OCI-LY7 (cell line): ENCODE measurements at regions of chr3 and their contacts with region 1.

Region 1: DNA sequence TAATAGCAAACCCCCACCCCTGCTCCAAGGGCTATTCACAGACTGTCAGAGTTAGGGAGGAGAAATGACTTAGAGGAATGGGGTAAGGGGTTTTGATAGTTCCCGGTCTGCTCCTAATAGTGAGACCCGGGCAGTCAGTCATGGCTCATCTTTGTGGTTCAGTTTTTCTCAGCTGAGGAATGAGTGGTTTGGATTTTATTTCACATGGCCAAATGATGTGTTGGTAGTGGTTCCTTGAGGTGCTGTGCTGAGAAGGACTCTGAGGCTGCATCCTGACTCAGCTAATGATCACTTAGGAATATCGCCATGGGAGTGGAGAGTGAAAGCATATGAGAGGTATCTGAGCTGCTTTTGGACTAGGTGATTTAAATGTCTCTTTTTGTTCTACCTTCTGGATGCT is 80.2 kb downstream of the LPP start:
- DNase-seq: no peak
- H3K4me3 ChIP-seq: no peak overlapping the region
- H3K27ac ChIP-seq: no peak overlapping the region
- H3K4me1 ChIP-seq: peaks cover 77% of the 10 kb centered on the region
- CTCF ChIP-seq: no peak

Region 2: GRCh38 chr3:188214442-188214841 is 19.7 kb before region 1 on chr3:
- CTCF ChIA-PET with region 1: interaction called, 3 read pairs
- POLR2A ChIA-PET with region 1: interaction called, 14 read pairs
- intact Hi-C with region 1: loop called (anchors 1 kb)
- DNase-seq: peak; percentile 82
- H3K4me3 ChIP-seq: peak overlapping the region; percentile 47
- H3K27ac ChIP-seq: peak overlapping the region; percentile 98
- H3K4me1 ChIP-seq: peaks cover 80% of the 10 kb centered on the region
- CTCF ChIP-seq: no peak